ENCODE measurements at regions of chr2 and their contacts with region 1.

Region 1: GRCh38 chr2:264660-265468 is at the start of gene ACP1:
- H3K4me3 Mint-ChIP-seq: peak within 1 kb of the TSS; percentile 91
- H3K27ac Mint-ChIP-seq: peak within 1 kb of the TSS; percentile 93
- H3K4me1 Mint-ChIP-seq: peaks cover 37% of the 10 kb centered on the region
- H3K27me3 Mint-ChIP-seq: peaks cover 5% of the 10 kb centered on the region

Region 2: GRCh38 chr2:201648-202433 is 63.0 kb before region 1 on chr2:
- intact Hi-C with region 1: no loop called
- H3K4me3 Mint-ChIP-seq: no peak overlapping the region
- H3K27ac Mint-ChIP-seq: no peak overlapping the region
- H3K4me1 Mint-ChIP-seq: no peaks in the 10 kb centered on the region
- H3K27me3 Mint-ChIP-seq: no peaks in the 10 kb centered on the region

Region 3: DNA sequence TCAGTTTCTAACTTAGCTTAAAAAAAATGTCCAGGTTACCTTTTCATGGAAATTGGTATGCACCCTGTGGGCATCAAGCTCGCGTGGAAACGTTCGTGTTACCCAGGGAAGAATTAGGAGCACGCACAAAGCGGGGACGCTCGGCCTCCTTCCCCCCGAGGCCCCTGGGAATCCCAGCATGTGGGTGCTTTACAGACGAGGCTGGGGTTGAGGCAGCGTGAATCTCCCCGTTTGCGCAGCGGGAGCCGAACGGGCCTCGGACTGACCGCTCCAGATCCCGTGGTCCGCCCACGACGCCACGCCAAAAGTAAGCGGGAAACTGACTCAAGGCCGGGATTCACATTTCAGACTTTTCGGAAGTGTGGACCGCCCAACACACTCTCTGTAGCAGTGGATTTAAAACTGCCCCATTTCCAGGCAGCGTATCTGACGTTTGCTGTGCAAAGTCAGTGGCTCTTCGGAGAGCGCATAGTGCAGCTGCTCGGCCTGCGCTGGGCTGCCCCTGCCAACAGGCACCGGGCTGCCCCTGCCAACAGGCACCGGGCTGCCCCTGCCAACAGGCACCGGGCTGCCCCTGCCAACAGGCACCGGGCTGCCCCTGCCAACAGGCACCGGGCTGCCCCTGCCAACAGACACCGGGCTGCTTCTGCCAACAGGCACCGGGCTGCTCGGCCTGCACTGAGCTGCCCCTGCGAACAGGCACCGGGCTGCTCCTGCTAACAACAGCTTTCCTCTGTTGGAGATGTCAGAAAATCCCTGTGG is 50.8 kb before region 1 on chr2:
- intact Hi-C with region 1: no loop called
- H3K4me3 Mint-ChIP-seq: no peak overlapping the region
- H3K27ac Mint-ChIP-seq: no peak overlapping the region
- H3K4me1 Mint-ChIP-seq: no peaks in the 10 kb centered on the region
- H3K27me3 Mint-ChIP-seq: peaks cover 2% of the 10 kb centered on the region

Region 4: DNA sequence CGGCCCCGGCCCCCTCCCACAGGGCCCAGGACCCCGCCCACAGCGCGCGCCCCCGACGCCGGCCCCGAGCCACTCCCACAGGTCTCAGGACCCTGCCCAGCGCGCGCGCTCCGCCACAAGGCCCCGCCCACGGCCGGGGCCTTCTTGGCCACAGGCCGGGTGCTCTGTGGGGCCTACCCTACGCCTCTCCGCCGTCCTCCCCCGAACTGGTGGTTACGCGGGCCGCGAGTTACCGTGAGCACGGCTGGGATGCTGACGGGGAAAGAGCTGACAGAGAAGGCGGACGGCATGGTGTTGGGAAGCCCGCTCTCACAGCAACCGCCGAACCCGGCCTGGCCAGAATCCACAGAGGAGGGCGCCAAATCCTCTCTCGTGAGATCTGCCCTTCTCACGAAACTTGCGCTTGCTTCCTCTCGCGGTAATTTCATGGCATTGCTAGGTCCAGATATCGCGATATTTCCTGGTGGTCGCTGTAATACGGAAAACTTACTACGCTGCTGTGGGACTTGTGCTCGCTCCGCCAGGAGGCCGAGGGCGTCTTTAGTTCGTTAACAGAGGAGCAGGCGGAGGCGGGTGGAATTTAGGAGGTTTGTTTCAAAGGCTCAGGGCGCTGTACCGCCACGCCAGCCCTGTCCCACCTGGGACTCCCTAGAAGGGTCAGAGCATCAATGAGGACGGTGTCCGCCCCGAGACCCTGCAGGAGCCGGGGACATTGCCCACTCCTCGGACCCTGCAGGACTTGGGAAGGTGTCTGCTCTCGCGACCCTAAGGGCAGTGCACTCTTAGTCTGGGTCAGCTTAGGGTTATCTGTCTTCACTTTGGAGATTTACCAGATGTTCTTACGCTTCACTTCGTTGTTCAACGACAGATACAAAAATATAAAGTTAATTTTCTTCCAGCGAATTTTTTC is 412.4 kb after region 1 on chr2 and contains the start of gene TMEM18:
- intact Hi-C with region 1: loop called (anchors 5 kb)
- H3K4me3 Mint-ChIP-seq: peak within 1 kb of the TSS; percentile 89
- H3K27ac Mint-ChIP-seq: peak within 1 kb of the TSS; percentile 96
- H3K4me1 Mint-ChIP-seq: peaks cover 38% of the 10 kb centered on the region
- H3K27me3 Mint-ChIP-seq: no peaks in the 10 kb centered on the region